Left cardiac atrium (tissue), 4 donors: ENCODE measurements at regions of chr18 and their contacts with region 1.

Region 1: DNA sequence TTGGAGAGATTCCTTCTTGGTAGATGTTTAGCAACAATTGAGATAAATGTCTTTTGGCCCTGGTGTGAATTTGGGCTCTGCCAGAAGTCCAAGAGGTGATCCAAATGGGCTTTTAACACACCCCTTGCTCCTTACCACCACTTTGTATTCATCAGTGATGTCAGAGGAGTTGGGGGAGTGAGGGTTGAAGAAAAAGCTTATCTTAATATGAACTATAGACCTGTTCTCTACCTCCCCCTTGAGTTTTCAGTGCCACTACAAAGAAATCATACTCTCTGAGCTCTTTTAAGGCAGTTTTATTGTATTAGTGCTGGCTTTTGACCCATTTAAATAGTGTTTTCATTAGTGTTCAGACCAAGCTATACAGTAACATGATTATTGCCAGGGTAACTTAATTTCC is 229.1 kb downstream of the PHLPP1 start:
- DNase-seq: no peak
- ATAC-seq: peak in 1 of 2 donors; percentile 83

Region 2: GRCh38 chr18:62898359-62898758 is 46.1 kb before region 1 on chr18:
- intact Hi-C with region 1: loop called in 1 of 2 experiments (anchors 10 kb)
- DNase-seq: no peak
- ATAC-seq: no peak